ENCODE measurements at regions of chr1 and their contacts with region 1.

Region 1: GRCh38 chr1:181397845-181398244 is 85.5 kb upstream of the CACNA1E start:
- DNase-seq: peak in 6 of 9 experiments; percentile 11 to 67 (median 40)
- ATAC-seq: peak; percentile 19
- H3K4me3 ChIP-seq: peak overlapping the region in 1 of 2 experiments; percentile 14
- H3K4me3 Mint-ChIP-seq: peak overlapping the region; percentile 63
- H3K27ac ChIP-seq: peak overlapping the region; percentile 36 to 52
- H3K27ac Mint-ChIP-seq: no peak overlapping the region
- H3K4me1 ChIP-seq: peaks cover 83% of the 10 kb centered on the region
- H3K4me1 Mint-ChIP-seq: peaks cover 38% of the 10 kb centered on the region
- H3K27me3 ChIP-seq: no peaks in the 10 kb centered on the region
- H3K27me3 Mint-ChIP-seq: no peaks in the 10 kb centered on the region
- CTCF ChIP-seq: no peak

Region 2: DNA sequence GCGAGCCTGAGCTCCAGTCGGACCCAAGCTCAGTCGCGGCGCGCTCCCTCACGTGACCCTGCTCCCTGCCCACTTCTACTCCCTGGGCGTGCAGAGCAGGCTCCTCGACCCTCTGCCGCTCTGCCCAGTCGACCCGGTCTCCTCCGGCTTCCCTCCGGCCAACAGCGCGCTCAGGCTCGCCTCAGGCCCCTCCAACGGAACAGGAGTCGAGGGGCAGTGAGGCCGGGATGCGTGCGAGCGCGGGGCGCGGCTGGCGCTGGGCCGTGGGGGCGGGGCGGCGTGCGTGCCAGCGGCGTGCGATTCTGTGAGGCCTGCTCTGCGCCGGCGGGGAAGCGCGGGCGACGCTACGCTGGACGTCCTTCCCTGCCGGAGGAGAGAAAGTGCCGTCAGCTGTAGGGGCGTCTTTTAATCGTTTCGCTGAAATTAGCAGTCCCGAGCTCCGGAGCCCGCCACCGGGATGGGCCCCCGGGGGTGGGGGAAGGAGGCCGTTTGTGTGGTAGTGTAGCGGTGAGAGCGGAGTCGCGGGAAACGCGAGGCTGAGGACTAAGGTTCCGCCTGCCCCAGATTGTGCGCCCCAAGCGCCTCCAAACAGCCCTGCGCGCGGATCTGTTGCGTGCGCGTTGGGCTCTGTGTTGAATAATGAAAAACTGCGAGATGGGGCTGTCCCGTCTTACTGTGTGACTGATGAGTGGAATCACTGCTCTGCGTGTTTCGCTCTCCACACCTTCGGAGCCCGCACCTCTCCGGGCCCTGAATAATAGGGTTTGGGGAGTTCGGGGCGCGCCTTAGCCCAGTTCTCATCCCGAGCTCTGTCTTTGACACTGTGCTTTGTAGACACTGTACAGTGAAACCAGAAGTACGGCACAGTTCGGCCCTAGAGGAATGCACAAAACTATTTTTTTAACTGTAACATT is 895.2 kb before region 1 on chr1 and contains the start of gene ACBD6:
- CTCF ChIA-PET with region 1: no interaction called
- POLR2A ChIA-PET with region 1: no interaction called
- intact Hi-C with region 1: loop called in 1 of 2 experiments (anchors 10 kb)
- DNase-seq: peak; percentile 73 to 92 (median 84)
- ATAC-seq: peak; percentile 89
- H3K4me3 ChIP-seq: peak within 1 kb of the TSS; percentile 96 to 97
- H3K4me3 Mint-ChIP-seq: peak within 1 kb of the TSS; percentile 96
- H3K27ac ChIP-seq: peak within 1 kb of the TSS; percentile 75 to 76
- H3K27ac Mint-ChIP-seq: peak within 1 kb of the TSS; percentile 98
- H3K4me1 ChIP-seq: peaks cover 27% of the 10 kb centered on the region
- H3K4me1 Mint-ChIP-seq: peaks cover 47% of the 10 kb centered on the region
- H3K27me3 ChIP-seq: no peaks in the 10 kb centered on the region
- H3K27me3 Mint-ChIP-seq: no peaks in the 10 kb centered on the region
- CTCF ChIP-seq: no peak
- total RNA-seq, gene ACBD6: 23.4 to 24.6 TPM

Region 3: GRCh38 chr1:181033799-181034451 is 363.9 kb before region 1 on chr1 and contains the start of gene MR1:
- CTCF ChIA-PET with region 1: no interaction called
- POLR2A ChIA-PET with region 1: no interaction called
- intact Hi-C with region 1: loop called (anchors 5 to 10 kb)
- DNase-seq: peak in 7 of 9 experiments; percentile 16 to 93 (median 48)
- ATAC-seq: peak; percentile 97
- H3K4me3 ChIP-seq: peak within 1 kb of the TSS; percentile 66 to 76
- H3K4me3 Mint-ChIP-seq: peak within 1 kb of the TSS; percentile 96
- H3K27ac ChIP-seq: peak within 1 kb of the TSS; percentile 85 to 99
- H3K27ac Mint-ChIP-seq: peak within 1 kb of the TSS; percentile 99
- H3K4me1 ChIP-seq: peaks cover 39% of the 10 kb centered on the region
- H3K4me1 Mint-ChIP-seq: peaks cover 55% of the 10 kb centered on the region
- H3K27me3 ChIP-seq: no peaks in the 10 kb centered on the region
- H3K27me3 Mint-ChIP-seq: no peaks in the 10 kb centered on the region
- CTCF ChIP-seq: no peak
- total RNA-seq, gene MR1: 15.4 to 16.0 TPM

Region 4: DNA sequence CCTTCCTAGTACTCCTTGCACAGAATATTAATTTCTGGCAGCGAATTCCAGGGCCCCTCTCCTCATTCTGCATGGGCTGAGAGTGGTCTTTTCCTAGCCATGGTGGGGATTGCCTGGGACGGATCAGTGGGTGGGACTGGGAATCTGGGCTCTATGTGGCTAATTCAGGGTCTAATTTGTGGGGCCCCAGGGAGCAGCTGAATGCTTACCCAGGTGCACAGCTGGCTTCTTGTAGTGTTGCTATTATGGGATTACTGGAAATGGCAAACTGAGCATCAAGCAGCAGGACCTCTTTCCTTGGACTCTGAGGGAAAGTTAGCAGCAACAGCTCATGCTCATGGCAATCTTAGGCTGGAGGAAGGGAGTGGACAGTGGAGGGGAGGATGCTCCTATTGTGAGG is 101.7 kb before region 1 on chr1:
- CTCF ChIA-PET with region 1: no interaction called
- POLR2A ChIA-PET with region 1: no interaction called
- intact Hi-C with region 1: no loop called
- DNase-seq: no peak
- ATAC-seq: no peak
- H3K4me3 ChIP-seq: no peak overlapping the region
- H3K4me3 Mint-ChIP-seq: no peak overlapping the region
- H3K27ac ChIP-seq: no peak overlapping the region
- H3K27ac Mint-ChIP-seq: no peak overlapping the region
- H3K4me1 ChIP-seq: no peaks in the 10 kb centered on the region
- H3K4me1 Mint-ChIP-seq: no peaks in the 10 kb centered on the region
- H3K27me3 ChIP-seq: no peaks in the 10 kb centered on the region
- H3K27me3 Mint-ChIP-seq: peaks cover 6% of the 10 kb centered on the region
- CTCF ChIP-seq: no peak

Region 5: DNA sequence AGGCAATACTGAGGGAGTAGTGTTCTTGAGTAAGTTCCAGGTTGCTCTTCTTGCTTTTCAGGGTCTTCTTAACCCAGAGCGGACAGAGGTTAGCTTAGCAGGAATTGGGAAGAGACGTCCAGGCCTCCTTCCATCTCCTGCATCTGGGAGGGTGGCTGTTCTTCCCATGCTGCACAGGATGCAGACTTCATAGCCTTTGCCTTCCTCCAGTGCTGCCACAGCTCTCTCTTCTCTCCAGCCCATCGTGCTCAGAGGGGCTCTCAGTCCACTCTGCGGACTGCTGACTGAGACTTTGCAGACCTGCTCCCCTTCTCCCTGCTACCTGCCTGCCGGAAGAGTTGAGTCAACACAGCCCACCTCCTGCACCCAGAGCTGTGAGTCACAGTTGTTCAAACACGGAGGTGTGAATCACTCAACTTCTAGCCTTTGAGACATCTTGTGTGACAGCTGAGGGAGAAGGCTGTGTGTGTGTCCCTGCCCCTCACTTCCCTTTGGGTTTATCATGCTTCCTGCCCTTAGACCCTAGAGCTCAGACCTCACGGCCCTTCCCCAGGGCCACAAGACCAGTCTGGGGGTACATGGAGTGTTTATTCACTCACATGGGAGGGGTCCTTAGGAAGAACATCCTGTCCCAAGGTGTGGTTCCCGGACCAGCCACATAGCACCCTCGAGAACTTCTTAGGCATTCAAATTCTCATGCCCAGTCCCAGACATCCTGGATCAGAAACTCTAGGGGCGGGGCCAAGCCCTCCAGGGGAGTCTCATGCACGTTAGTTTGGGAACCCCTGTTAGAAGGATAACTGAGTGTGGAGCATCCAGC is 72.8 kb before region 1 on chr1:
- CTCF ChIA-PET with region 1: interaction called, 3 read pairs
- POLR2A ChIA-PET with region 1: interaction called, 3 read pairs
- intact Hi-C with region 1: loop called in 1 of 2 experiments (anchors 1 kb)
- DNase-seq: peak in 8 of 9 experiments; percentile 17 to 67 (median 27)
- ATAC-seq: peak; percentile 69
- H3K4me3 ChIP-seq: no peak overlapping the region
- H3K4me3 Mint-ChIP-seq: no peak overlapping the region
- H3K27ac ChIP-seq: no peak overlapping the region
- H3K27ac Mint-ChIP-seq: no peak overlapping the region
- H3K4me1 ChIP-seq: peaks cover 9% of the 10 kb centered on the region
- H3K4me1 Mint-ChIP-seq: peaks cover 16% of the 10 kb centered on the region
- H3K27me3 ChIP-seq: no peaks in the 10 kb centered on the region
- H3K27me3 Mint-ChIP-seq: peaks cover 5% of the 10 kb centered on the region
- CTCF ChIP-seq: no peak

Region 6: GRCh38 chr1:181479137-181479745 is 81.4 kb after region 1 on chr1:
- CTCF ChIA-PET with region 1: no interaction called
- POLR2A ChIA-PET with region 1: no interaction called
- intact Hi-C with region 1: no loop called
- DNase-seq: peak in 3 of 9 experiments; percentile 13 to 59 (median 47)
- ATAC-seq: peak; percentile 42
- H3K4me3 ChIP-seq: no peak overlapping the region
- H3K4me3 Mint-ChIP-seq: no peak overlapping the region
- H3K27ac ChIP-seq: no peak overlapping the region
- H3K27ac Mint-ChIP-seq: no peak overlapping the region
- H3K4me1 ChIP-seq: peaks cover 4% of the 10 kb centered on the region
- H3K4me1 Mint-ChIP-seq: peaks cover 7% of the 10 kb centered on the region
- H3K27me3 ChIP-seq: peaks cover 4% of the 10 kb centered on the region in 2 experiments
- H3K27me3 Mint-ChIP-seq: peaks cover 38% of the 10 kb centered on the region
- CTCF ChIP-seq: peak; percentile 30

Region 7: GRCh38 chr1:181737056-181737455 is 339.2 kb after region 1 on chr1:
- CTCF ChIA-PET with region 1: no interaction called
- POLR2A ChIA-PET with region 1: no interaction called
- intact Hi-C with region 1: no loop called
- DNase-seq: no peak
- ATAC-seq: no peak
- H3K4me3 ChIP-seq: no peak overlapping the region
- H3K4me3 Mint-ChIP-seq: no peak overlapping the region
- H3K27ac ChIP-seq: no peak overlapping the region
- H3K27ac Mint-ChIP-seq: no peak overlapping the region
- H3K4me1 ChIP-seq: no peaks in the 10 kb centered on the region
- H3K4me1 Mint-ChIP-seq: no peaks in the 10 kb centered on the region
- H3K27me3 ChIP-seq: no peaks in the 10 kb centered on the region
- H3K27me3 Mint-ChIP-seq: peaks cover 6% of the 10 kb centered on the region
- CTCF ChIP-seq: no peak

Region 8: DNA sequence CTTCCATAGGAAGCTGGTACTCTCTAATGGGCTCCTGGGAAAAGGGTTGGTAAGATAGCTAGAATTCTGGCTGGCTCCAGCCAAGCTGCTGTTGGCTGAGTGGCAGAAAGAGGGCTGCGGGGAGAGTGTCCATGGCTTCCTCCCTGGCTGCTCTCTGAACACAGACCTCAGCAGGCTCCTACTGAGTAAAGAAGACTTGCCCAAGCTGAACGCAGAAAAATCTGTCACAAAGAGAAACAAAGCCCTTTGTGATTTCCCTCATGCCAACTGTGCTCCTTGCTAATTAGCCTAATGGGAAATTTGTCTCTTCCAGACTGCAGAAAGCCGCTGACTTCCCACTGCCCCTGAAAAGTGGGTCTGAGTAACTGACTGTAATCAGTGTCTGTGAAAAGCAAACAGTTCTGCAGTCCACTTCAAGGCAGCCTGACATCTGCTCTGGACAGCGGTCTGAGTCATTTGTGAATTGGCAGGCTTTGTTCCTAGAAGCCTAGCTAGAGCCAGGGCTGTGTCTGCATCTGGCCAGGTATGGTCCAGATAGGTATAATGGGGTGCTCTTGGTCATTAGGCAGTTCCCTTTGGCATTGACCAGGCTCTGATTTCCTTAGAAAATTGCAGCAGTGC is 380.9 kb after region 1 on chr1:
- CTCF ChIA-PET with region 1: no interaction called
- POLR2A ChIA-PET with region 1: no interaction called
- intact Hi-C with region 1: no loop called
- DNase-seq: no peak
- ATAC-seq: no peak
- H3K4me3 ChIP-seq: no peak overlapping the region
- H3K4me3 Mint-ChIP-seq: no peak overlapping the region
- H3K27ac ChIP-seq: no peak overlapping the region
- H3K27ac Mint-ChIP-seq: no peak overlapping the region
- H3K4me1 ChIP-seq: no peaks in the 10 kb centered on the region
- H3K4me1 Mint-ChIP-seq: no peaks in the 10 kb centered on the region
- H3K27me3 ChIP-seq: no peaks in the 10 kb centered on the region
- H3K27me3 Mint-ChIP-seq: peaks cover 9% of the 10 kb centered on the region
- CTCF ChIP-seq: no peak

Region 9: DNA sequence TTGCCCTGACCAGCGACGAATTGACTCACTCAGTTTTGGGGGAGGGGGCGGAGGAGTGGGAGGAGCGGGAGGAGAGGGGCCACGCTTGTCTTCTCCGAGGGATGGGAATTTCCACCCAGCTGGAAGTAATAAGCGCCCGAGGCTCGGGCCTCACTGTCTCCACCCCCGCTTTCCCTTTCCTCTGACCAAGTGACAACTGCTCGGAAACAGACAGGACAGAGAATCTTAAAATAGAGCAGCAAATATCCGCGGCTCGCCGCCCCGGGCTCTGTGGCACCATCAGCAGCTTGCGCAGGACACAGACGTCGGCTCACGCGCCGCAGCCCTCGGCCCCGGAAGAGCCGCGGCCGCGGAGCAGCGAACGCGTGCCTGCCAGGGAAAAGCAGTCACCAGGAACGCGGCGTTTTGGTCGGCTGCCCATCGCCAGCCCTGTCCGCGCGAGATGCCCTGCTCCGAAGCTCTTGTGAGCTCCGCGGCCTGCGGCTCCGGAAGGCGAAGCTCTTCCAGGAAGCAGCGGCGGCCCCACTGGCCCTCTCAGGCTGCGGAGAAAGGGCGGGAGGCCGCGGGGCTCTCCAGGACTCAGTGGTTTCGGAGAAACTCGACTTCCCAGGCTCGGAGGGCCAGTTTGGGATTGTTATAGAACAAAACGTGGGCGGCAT is 1217.1 kb after region 1 on chr1:
- CTCF ChIA-PET with region 1: no interaction called
- POLR2A ChIA-PET with region 1: no interaction called
- intact Hi-C with region 1: loop called in 1 of 2 experiments (anchors 5 kb)
- DNase-seq: peak in 6 of 9 experiments; percentile 12 to 70 (median 42)
- ATAC-seq: peak; percentile 3
- H3K4me3 ChIP-seq: peak overlapping the region; percentile 38 to 46
- H3K4me3 Mint-ChIP-seq: peak overlapping the region; percentile 73
- H3K27ac ChIP-seq: no peak overlapping the region
- H3K27ac Mint-ChIP-seq: peak overlapping the region; percentile 91
- H3K4me1 ChIP-seq: peaks cover 32% of the 10 kb centered on the region
- H3K4me1 Mint-ChIP-seq: peaks cover 30% of the 10 kb centered on the region
- H3K27me3 ChIP-seq: peaks cover 19 to 25% of the 10 kb centered on the region in 2 experiments
- H3K27me3 Mint-ChIP-seq: peaks cover 66% of the 10 kb centered on the region
- CTCF ChIP-seq: no peak

Measured in CD8-positive, alpha-beta T cell (primary cell).